ENCODE measurements at regions of chr6 and their contacts with region 1.

Region 1: GRCh38 chr6:25981568-25982263 is 19.1 kb downstream of the TRIM38 start:
- DNase-seq: no peak
- ATAC-seq: peak; percentile 57; the same call in 2 of the 3 replicates
- H3K4me3 ChIP-seq: no peak overlapping the region
- H3K27ac ChIP-seq: no peak overlapping the region
- H3K4me1 ChIP-seq: peaks cover 0 to 4% of the 10 kb centered on the region in 2 experiments; a peak in 1 of 5 replicates
- H3K27me3 ChIP-seq: no peaks in the 10 kb centered on the region
- CTCF ChIP-seq: no peak
- EP300 ChIP-seq: no peak
- POLR2A ChIP-seq: no peak
- RAD21 ChIP-seq: no peak

Region 2: DNA sequence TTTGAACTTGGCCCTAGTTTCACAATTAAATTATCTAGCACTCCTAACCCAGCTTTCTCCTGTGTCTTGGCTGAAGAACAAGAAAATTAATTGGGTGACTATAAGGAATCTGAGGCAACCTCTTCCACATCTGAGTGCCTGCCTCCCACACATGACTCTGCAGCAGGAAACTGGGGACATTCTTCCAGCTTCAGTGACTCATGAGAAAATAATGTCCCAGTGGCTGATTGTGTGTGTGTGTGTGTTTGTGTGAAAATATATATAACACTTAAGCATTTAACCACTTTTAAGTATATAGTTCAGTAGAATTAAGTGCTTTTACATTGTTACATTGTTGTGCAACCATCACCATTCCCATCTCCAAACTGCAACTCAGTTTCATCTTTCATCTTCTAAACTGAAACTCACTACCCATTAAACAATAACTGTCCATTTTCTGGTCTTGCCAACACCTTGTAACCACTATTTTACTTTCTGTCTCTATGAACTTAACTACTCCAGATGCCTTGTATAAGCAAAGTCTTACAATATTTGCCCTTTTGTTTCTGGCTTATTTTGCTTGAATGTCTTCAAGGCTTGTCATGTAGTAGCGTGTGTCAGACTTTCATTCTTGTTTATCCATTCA is 10.4 kb before region 1 on chr6:
- CTCF ChIA-PET with region 1: interaction called, 3 read pairs
- POLR2A ChIA-PET with region 1: interaction called, 19 read pairs
- in situ Hi-C with region 1: no loop called
- intact Hi-C with region 1: no loop called
- DNase-seq: peak; percentile 63 to 87 (median 68)
- ATAC-seq: peak; percentile 92
- H3K4me3 ChIP-seq: no peak overlapping the region
- H3K27ac ChIP-seq: peak overlapping the region; percentile 16; the same call in 2 of the 3 replicates
- H3K4me1 ChIP-seq: peaks cover 8 to 19% of the 10 kb centered on the region in 2 experiments
- H3K27me3 ChIP-seq: no peaks in the 10 kb centered on the region
- CTCF ChIP-seq: no peak
- EP300 ChIP-seq: peak; percentile 87
- POLR2A ChIP-seq: no peak
- RAD21 ChIP-seq: no peak